ENCODE measurements at regions of chr9 and their contacts with region 1.

Region 1: DNA sequence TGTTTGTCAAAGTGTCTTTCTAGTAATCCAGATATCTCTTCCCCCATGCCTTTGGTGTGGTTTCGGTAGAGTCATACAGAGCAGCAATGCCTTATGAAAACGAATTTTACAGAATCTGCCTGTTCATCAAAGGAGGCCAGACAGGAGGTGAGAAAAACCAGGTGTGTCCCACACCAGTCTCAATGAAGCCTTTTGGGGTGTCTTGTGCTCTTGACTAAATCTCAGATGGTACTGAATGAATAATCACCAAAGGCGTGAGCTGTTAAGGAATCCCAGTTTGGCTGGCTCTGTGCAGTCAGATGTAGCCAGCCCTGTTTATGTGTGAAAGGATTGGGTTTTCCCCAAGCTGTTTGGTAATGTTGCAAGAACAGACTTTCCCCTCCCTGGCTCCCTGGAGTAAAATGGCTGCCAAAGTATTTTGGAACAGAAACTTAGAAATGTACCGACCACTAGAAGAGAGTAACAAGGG is 70.8 kb upstream of the CDKN2B start:
- DNase-seq: no peak
- ATAC-seq: no peak
- H3K4me3 ChIP-seq: no peak overlapping the region
- H3K27ac ChIP-seq: no peak overlapping the region
- H3K4me1 ChIP-seq: peaks cover 7 to 13% of the 10 kb centered on the region in 2 experiments
- H3K27me3 ChIP-seq: no peaks in the 10 kb centered on the region
- CTCF ChIP-seq: no peak
- POLR2A ChIP-seq: no peak
- RAD21 ChIP-seq: no peak

Region 2: DNA sequence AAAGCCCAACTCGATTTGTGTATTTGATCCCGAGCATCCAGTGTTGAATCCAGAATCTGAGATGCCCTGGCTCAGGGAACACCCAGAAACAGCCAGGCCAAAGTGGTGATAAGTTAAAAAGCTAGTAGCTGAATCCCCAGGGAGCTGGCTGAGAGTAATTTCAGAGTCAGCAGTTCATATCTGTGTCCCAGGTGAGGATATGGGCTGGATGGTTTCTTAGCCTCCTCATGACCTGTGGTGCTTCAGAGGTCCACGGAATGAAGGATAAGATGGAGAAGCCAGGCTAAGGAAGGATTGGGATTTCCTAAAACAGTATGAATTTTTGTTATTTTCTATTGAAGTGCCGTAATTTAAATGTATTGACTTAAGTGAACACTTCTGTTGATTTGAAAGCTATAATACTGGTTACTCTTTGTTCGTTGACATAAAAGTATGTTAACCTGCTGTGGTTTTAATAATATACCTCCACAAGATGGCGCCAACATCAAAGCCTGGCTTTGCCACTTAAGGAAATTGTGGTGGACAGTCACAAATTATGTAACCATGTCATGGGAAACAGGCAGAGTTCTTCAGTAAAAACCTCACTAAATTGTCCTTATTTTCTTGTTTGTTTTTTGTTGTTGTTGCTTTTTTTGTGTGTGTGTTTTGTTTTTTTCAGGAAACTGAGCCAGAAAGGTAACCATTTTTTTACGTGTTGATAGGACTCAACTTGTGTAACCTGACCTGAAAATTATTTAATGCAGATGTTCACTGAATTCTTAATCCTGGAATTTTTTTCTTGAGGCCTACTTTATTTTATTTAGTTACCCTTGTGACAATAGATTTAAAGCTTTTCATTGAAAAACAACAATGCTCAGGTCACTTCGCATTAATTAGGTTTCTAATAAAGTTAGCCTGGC is 266.1 kb before region 1 on chr9:
- CTCF ChIA-PET with region 1: no interaction called
- POLR2A ChIA-PET with region 1: no interaction called
- RAD21 ChIA-PET with region 1: no interaction called
- intact Hi-C with region 1: no loop called
- DNase-seq: peak; percentile 69
- ATAC-seq: peak; percentile 24; the same call in 1 of the 2 replicates
- H3K4me3 ChIP-seq: no peak overlapping the region
- H3K27ac ChIP-seq: peak overlapping the region; percentile 11
- H3K4me1 ChIP-seq: peaks cover 5 to 38% of the 10 kb centered on the region in 2 experiments; a peak in 3 of 4 replicates
- H3K27me3 ChIP-seq: no peaks in the 10 kb centered on the region
- CTCF ChIP-seq: peak; percentile 55 to 82 (median 77); a peak in 5 of 6 replicates
- POLR2A ChIP-seq: no peak
- RAD21 ChIP-seq: peak; percentile 90

Region 3: DNA sequence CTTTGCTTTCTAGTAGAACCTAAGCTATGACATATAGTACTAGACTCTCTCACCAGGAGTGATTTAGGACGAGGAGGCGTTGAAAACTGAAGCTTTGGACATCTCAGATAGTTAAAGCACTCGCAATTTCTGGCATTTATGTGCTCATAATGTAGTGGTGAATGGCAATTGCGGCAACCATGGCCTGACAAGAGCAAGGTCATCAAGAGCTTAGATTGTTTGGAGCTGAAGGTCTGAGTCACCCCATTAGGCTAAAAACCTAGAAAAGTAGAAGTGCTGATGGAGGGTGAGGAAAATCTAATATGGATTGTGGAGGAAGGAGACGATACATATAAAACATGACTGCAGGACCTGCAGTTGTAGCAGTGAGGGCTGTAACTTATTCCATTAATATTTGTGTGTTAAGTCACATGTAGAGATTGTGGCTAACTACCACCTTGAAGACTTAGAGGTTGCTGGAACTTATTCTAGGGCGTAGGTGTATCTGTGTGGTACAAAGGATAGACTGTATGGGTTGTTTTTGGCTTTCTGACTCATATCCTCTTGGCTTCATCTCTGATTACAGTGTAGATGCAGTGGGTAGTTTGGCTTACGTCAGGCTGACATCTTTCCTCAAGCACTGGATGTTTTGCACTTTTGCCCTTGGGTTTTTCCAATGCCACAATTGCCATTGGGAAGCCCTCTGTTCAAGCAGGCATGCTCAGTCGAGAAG is 68.1 kb after region 1 on chr9:
- CTCF ChIA-PET with region 1: no interaction called
- POLR2A ChIA-PET with region 1: no interaction called
- RAD21 ChIA-PET with region 1: no interaction called
- intact Hi-C with region 1: loop called (anchors 10 kb)
- DNase-seq: peak; percentile 60
- ATAC-seq: peak; percentile 89
- H3K4me3 ChIP-seq: no peak overlapping the region
- H3K27ac ChIP-seq: no peak overlapping the region
- H3K4me1 ChIP-seq: peaks cover 0 to 16% of the 10 kb centered on the region in 2 experiments; a peak in 2 of 4 replicates
- H3K27me3 ChIP-seq: no peaks in the 10 kb centered on the region
- CTCF ChIP-seq: no peak
- POLR2A ChIP-seq: peak; percentile 18
- RAD21 ChIP-seq: no peak